MCF 10A (cell line): ENCODE measurements at regions of chrX and their contacts with region 1.

Region 1: DNA sequence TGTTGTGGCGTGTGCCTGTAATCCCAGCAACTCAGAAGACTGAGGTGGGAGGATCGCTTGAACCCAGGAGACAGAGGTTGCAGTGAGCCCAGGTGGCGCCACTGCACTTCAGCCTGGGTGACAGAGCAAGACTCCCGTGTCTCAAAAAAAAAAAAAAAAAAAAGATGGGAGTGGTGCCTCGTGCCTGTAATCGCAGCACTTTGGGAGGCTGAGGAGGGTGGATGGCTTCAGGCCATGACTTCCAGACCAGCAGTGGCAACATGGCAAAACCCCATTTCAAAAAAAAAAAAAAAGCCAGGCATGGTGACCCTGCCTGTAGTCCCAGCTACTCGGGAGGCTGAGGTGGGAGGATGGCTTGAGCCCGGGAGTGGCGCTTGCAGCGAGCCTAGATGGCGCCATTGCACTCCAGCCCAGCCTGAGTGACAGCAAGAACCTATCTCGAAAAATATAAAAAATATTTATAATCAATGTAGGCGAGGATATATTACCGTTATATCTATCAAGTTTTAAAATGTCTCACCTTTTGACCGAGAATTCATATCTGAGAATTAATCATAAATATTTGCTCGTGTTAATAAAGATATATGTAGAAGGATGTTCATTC is 27.0 kb downstream of the EIF2S3 start:
- DNase-seq: peak; percentile 84
- H3K4me3 Mint-ChIP-seq: peak overlapping the region; percentile 21
- H3K27ac Mint-ChIP-seq: no peak overlapping the region
- H3K4me1 Mint-ChIP-seq: no peaks in the 10 kb centered on the region
- H3K27me3 Mint-ChIP-seq: no peaks in the 10 kb centered on the region
- CTCF ChIP-seq: peak; percentile 65

Region 2: DNA sequence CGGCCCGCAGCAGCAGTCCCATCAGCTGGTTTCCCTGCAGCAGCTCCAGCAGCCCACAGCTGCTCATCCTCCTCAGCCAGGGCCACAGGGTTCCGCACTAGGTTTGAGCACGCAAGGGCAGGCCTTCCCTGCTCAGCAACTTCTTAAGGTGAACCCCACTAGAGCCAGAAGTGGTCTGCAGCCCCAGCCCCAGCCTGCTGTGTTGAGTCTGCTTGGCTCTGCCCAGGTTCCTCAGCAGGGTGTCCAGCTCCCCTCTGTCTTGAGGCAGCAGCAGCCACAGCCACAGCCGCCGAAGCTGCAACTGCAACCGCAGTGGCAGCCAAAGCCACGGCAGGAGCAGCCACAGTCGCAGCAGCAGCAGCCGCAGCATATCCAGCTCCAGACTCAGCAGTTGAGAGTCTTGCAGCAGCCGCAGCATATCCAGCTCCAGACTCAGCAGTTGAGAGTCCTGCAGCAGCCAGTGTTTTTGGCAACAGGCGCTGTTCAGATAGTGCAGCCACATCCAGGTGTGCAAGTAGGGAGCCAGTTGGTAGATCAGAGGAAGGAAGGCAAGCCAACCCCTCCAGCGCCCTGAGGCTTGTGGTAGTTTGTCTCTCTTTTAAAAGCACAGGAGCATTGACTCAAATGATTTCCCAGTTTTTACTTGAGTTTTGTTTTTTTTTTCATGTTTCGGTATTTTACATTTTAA is 283.2 kb after region 1 on chrX:
- CTCF ChIA-PET with region 1: no interaction called
- POLR2A ChIA-PET with region 1: no interaction called
- intact Hi-C with region 1: loop called (anchors 5 kb)
- DNase-seq: no peak
- H3K4me3 Mint-ChIP-seq: no peak overlapping the region
- H3K27ac Mint-ChIP-seq: no peak overlapping the region
- H3K4me1 Mint-ChIP-seq: no peaks in the 10 kb centered on the region
- H3K27me3 Mint-ChIP-seq: peaks cover 79% of the 10 kb centered on the region
- CTCF ChIP-seq: no peak